Caco-2 (cell line): ENCODE measurements at regions of chr5 and their contacts with region 1.

Region 1: DNA sequence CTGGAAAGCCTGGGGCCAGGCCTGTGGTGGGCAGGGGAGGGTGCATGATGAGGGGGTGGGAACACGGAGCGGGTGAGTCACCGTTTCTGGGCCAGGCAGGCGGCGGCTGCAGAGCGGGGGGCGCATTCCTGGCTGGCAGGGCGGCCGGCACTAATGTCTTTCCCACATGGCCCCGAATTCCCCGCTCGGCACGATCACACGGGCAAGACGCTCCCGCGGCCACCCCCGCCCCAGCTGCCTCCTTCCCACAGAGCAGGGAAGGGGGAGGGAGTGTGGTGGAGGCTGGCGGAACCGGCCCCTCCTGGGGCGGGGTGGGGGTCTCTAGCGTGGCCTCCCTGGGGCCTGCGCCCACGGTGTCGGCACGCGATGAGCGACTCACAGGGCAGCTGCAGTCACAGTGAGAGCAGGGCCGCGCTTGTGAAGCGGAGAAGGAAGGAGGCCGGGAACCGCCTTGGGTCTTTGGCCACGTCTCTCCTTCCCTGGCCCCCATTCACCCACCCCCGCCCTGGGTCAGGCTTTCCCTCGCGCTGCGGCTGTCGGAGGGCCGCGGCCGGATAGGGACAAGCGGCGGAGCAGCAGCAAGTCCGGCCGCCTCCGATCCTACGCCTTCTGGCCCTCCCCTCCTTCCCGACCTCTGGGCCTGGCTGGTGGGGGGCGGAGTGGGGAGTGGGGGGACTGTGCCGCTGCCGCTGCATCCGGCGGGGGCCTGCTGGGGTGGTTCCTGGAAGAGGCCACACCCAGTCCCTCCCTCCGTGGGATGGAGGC is 48.9 kb downstream of the CXXC5 start:
- DNase-seq: peak; percentile 83 to 90
- H3K4me3 ChIP-seq: peak overlapping the region; percentile 53
- H3K4me3 Mint-ChIP-seq: peak overlapping the region; percentile 73
- H3K27ac Mint-ChIP-seq: peak overlapping the region; percentile 85
- H3K4me1 ChIP-seq: peaks cover 64% of the 10 kb centered on the region
- H3K4me1 Mint-ChIP-seq: peaks cover 14% of the 10 kb centered on the region
- H3K27me3 ChIP-seq: no peaks in the 10 kb centered on the region
- H3K27me3 Mint-ChIP-seq: no peaks in the 10 kb centered on the region
- CTCF ChIP-seq: no peak

Region 2: GRCh38 chr5:139560752-139561654 is 136.1 kb before region 1 on chr5 and contains the start of gene UBE2D2:
- CTCF ChIA-PET with region 1: no interaction called
- POLR2A ChIA-PET with region 1: no interaction called
- intact Hi-C with region 1: loop called (anchors 5 kb)
- DNase-seq: peak; percentile 97 to 98
- H3K4me3 ChIP-seq: peak within 1 kb of the TSS; percentile 79
- H3K4me3 Mint-ChIP-seq: peak within 1 kb of the TSS; percentile 93
- H3K27ac Mint-ChIP-seq: peak within 1 kb of the TSS; percentile 92
- H3K4me1 ChIP-seq: 0 out of 2 replicates have a peak, but pooled peaks cover 13% of the 10 kb centered on the region
- H3K4me1 Mint-ChIP-seq: peaks cover 7% of the 10 kb centered on the region
- H3K27me3 ChIP-seq: no peaks in the 10 kb centered on the region
- H3K27me3 Mint-ChIP-seq: no peaks in the 10 kb centered on the region
- CTCF ChIP-seq: no peak
- total RNA-seq, gene UBE2D2: 192 and 193 TPM in 2 replicates

Region 3: DNA sequence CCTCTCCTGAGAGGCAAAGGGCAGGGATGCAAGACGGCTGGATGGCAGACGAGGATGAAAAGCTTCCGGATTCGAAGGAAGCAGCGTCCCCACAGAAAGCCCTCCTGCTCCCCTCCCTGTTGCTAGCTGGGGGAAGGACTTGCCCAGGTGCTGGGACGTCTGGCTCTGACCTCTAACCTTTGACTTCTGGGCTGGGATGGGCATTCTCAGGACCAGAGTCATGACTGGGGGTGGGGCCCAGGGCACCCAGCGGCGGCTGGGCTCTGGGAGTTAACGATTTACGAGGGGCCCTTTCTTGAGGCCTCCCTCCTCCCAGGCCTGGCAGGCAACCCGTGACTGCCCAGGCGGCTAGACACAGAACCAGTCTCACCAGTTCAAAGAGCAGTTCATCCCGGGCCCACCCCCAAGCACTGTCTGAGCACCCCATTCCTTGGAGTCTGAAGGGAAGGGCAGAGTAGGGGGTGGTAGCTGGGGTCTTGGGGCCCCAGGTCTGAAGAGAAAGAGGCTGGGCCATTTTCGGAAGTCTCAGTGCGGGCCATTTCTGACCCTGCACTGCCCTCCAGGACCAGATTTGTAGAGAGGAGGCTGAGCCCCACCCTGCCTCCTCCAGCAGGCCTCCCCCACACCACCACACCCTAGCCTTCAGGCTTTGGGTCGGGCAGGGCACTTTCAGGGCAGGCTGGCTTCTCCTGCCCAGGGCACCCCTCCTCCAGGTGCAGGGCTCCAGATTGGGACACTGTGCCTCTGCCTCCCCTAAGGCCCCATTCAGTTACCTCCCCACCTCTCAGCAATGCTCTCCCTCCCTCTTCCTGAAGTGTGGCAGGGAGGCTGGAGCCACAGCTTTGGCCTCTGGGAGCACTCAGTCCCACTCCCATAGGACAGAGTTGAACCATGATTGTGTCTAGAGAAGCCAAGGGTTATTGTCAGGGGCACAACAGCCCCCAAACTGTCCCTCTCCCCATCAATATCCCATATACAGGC is 53.9 kb before region 1 on chr5:
- CTCF ChIA-PET with region 1: interaction called, 8 read pairs
- POLR2A ChIA-PET with region 1: interaction called, 16 read pairs
- intact Hi-C with region 1: loop called (anchors 2 kb)
- DNase-seq: peak; percentile 96
- H3K4me3 ChIP-seq: peak overlapping the region; percentile 3; the same call in 1 of the 2 replicates
- H3K4me3 Mint-ChIP-seq: peak overlapping the region; percentile 67
- H3K27ac Mint-ChIP-seq: peak overlapping the region; percentile 96
- H3K4me1 ChIP-seq: peaks cover 83% of the 10 kb centered on the region
- H3K4me1 Mint-ChIP-seq: peaks cover 71% of the 10 kb centered on the region
- H3K27me3 ChIP-seq: no peaks in the 10 kb centered on the region
- H3K27me3 Mint-ChIP-seq: no peaks in the 10 kb centered on the region
- CTCF ChIP-seq: no peak

Region 4: GRCh38 chr5:139648205-139649081 is 48.6 kb before region 1 on chr5 and contains the start of gene CXXC5:
- CTCF ChIA-PET with region 1: interaction called, 8 read pairs
- POLR2A ChIA-PET with region 1: interaction called, 16 read pairs
- intact Hi-C with region 1: loop called (anchors 2 kb)
- DNase-seq: peak; percentile 88 to 90
- H3K4me3 ChIP-seq: peak within 1 kb of the TSS; percentile 91
- H3K4me3 Mint-ChIP-seq: peak within 1 kb of the TSS; percentile 93
- H3K27ac Mint-ChIP-seq: no peak within 1 kb of the TSS
- H3K4me1 ChIP-seq: peaks cover 58% of the 10 kb centered on the region
- H3K4me1 Mint-ChIP-seq: peaks cover 48% of the 10 kb centered on the region
- H3K27me3 ChIP-seq: no peaks in the 10 kb centered on the region
- H3K27me3 Mint-ChIP-seq: no peaks in the 10 kb centered on the region
- CTCF ChIP-seq: no peak
- total RNA-seq, gene CXXC5: 79.5 and 92.3 TPM in 2 replicates

Region 5: DNA sequence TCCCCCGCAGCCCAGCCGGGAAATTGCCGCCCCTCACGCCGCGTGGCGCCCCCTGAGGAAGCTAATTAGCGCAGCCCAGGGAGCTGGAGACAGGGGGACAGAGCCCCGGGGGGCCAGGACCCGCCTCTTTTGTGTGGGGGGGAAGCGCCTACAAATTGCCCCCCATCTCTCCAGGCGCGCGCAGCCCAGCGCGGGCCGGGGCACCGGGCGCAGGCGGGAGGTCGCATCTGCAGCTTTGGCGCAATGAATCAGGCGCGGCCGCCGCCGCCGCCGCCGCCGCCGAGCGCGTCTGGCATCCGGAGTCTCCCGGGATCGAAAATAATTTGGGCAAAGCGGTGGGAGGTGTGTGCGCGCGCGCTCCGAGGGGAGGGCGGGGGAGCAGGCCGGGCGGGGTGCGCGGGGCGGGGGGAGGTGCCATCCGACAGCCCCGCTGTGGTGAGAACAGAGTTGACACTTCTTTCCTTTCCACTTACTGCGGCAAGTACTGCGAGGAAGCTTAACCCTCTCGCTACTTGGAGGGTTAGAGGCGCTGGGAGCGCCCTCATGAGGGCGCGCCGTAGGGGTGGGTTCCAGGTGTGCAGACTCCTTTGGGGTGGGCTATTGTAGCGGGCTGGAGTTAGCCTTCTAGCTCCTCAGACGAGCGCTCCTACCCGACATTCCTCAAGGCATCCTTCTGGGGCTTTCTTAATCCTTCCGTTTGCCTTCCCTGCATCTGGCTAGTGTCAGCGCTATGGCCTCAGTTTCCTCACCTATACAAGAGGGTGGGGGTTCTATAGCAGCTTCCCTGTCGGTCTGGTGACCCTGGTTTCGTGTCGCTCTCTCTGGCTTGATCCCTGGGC is 14.2 kb after region 1 on chr5:
- CTCF ChIA-PET with region 1: interaction called, 37 read pairs
- POLR2A ChIA-PET with region 1: interaction called, 57 read pairs
- intact Hi-C with region 1: loop called (anchors 1 kb)
- DNase-seq: peak; percentile 66 to 68
- H3K4me3 ChIP-seq: peak overlapping the region; percentile 53
- H3K4me3 Mint-ChIP-seq: peak overlapping the region; percentile 75
- H3K27ac Mint-ChIP-seq: peak overlapping the region; percentile 88
- H3K4me1 ChIP-seq: peaks cover 31% of the 10 kb centered on the region
- H3K4me1 Mint-ChIP-seq: peaks cover 15% of the 10 kb centered on the region
- H3K27me3 ChIP-seq: no peaks in the 10 kb centered on the region
- H3K27me3 Mint-ChIP-seq: no peaks in the 10 kb centered on the region
- CTCF ChIP-seq: peak; percentile 25 to 63

Region 6: GRCh38 chr5:139733698-139734538 is 36.8 kb after region 1 on chr5:
- CTCF ChIA-PET with region 1: no interaction called
- POLR2A ChIA-PET with region 1: no interaction called
- intact Hi-C with region 1: no loop called
- DNase-seq: peak in 1 of 2 experiments; percentile 71
- H3K4me3 ChIP-seq: no peak overlapping the region
- H3K4me3 Mint-ChIP-seq: no peak overlapping the region
- H3K27ac Mint-ChIP-seq: peak overlapping the region; percentile 31
- H3K4me1 ChIP-seq: peaks cover 3% of the 10 kb centered on the region; the same call in 1 of the 2 replicates
- H3K4me1 Mint-ChIP-seq: no peaks in the 10 kb centered on the region
- H3K27me3 ChIP-seq: no peaks in the 10 kb centered on the region
- H3K27me3 Mint-ChIP-seq: no peaks in the 10 kb centered on the region
- CTCF ChIP-seq: no peak

Region 7: GRCh38 chr5:139745800-139746690 is 49.0 kb after region 1 on chr5:
- CTCF ChIA-PET with region 1: no interaction called
- POLR2A ChIA-PET with region 1: interaction called, 4 read pairs
- intact Hi-C with region 1: loop called (anchors 2 kb)
- DNase-seq: peak; percentile 82 to 86
- H3K4me3 ChIP-seq: peak overlapping the region; percentile 55
- H3K4me3 Mint-ChIP-seq: peak overlapping the region; percentile 92
- H3K27ac Mint-ChIP-seq: no peak overlapping the region
- H3K4me1 ChIP-seq: peaks cover 17% of the 10 kb centered on the region
- H3K4me1 Mint-ChIP-seq: peaks cover 31% of the 10 kb centered on the region
- H3K27me3 ChIP-seq: no peaks in the 10 kb centered on the region
- H3K27me3 Mint-ChIP-seq: no peaks in the 10 kb centered on the region
- CTCF ChIP-seq: no peak

Region 8: GRCh38 chr5:139765409-139766217 is 68.5 kb after region 1 on chr5:
- CTCF ChIA-PET with region 1: interaction called, 24 read pairs
- POLR2A ChIA-PET with region 1: no interaction called
- intact Hi-C with region 1: no loop called
- DNase-seq: peak; percentile 75 to 87
- H3K4me3 ChIP-seq: peak overlapping the region; percentile 62
- H3K4me3 Mint-ChIP-seq: peak overlapping the region; percentile 67
- H3K27ac Mint-ChIP-seq: peak overlapping the region; percentile 47
- H3K4me1 ChIP-seq: peaks cover 9% of the 10 kb centered on the region; the same call in 1 of the 2 replicates
- H3K4me1 Mint-ChIP-seq: peaks cover 6% of the 10 kb centered on the region
- H3K27me3 ChIP-seq: no peaks in the 10 kb centered on the region
- H3K27me3 Mint-ChIP-seq: no peaks in the 10 kb centered on the region
- CTCF ChIP-seq: peak; percentile 86 to 99

Region 9: GRCh38 chr5:139955053-139955605 is 258.1 kb after region 1 on chr5:
- CTCF ChIA-PET with region 1: no interaction called
- POLR2A ChIA-PET with region 1: no interaction called
- intact Hi-C with region 1: no loop called
- DNase-seq: no peak
- H3K4me3 ChIP-seq: no peak overlapping the region
- H3K4me3 Mint-ChIP-seq: no peak overlapping the region
- H3K27ac Mint-ChIP-seq: no peak overlapping the region
- H3K4me1 ChIP-seq: no peaks in the 10 kb centered on the region
- H3K4me1 Mint-ChIP-seq: no peaks in the 10 kb centered on the region
- H3K27me3 ChIP-seq: no peaks in the 10 kb centered on the region
- H3K27me3 Mint-ChIP-seq: peaks cover 5% of the 10 kb centered on the region
- CTCF ChIP-seq: no peak